A673 (cell line): ENCODE measurements at regions of chr1 and their contacts with region 1.

Region 1: DNA sequence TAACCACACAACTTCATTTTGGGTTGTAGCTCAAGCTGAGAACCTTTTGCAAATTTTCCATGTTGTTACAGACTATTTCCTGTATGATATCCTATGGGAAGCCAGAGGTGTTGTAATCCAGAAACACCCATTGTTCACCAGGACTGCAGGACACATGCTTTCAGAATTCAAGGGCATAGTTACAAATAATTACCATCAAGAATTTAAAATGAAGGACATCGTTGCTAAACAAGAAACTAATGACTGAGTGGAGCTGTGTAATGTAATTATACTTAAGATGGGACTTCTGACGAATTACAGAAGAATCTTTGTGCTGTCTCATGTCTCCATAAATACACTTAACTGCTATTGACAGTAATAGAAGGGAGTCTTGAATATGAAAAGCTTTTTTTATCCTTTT is 47.6 kb upstream of the HOOK1 start:
- DNase-seq: peak; percentile 88
- H3K4me3 ChIP-seq: no peak overlapping the region
- H3K27ac ChIP-seq: peak overlapping the region; percentile 83
- H3K4me1 ChIP-seq: peaks cover 80% of the 10 kb centered on the region
- H3K27me3 ChIP-seq: no peaks in the 10 kb centered on the region
- CTCF ChIP-seq: no peak

Region 2: GRCh38 chr1:59494145-59494833 is 272.8 kb before region 1 on chr1:
- CTCF ChIA-PET with region 1: no interaction called
- POLR2A ChIA-PET with region 1: no interaction called
- intact Hi-C with region 1: no loop called
- DNase-seq: no peak
- H3K4me3 ChIP-seq: no peak overlapping the region
- H3K27ac ChIP-seq: no peak overlapping the region
- H3K4me1 ChIP-seq: no peaks in the 10 kb centered on the region
- H3K27me3 ChIP-seq: no peaks in the 10 kb centered on the region
- CTCF ChIP-seq: no peak

Region 3: DNA sequence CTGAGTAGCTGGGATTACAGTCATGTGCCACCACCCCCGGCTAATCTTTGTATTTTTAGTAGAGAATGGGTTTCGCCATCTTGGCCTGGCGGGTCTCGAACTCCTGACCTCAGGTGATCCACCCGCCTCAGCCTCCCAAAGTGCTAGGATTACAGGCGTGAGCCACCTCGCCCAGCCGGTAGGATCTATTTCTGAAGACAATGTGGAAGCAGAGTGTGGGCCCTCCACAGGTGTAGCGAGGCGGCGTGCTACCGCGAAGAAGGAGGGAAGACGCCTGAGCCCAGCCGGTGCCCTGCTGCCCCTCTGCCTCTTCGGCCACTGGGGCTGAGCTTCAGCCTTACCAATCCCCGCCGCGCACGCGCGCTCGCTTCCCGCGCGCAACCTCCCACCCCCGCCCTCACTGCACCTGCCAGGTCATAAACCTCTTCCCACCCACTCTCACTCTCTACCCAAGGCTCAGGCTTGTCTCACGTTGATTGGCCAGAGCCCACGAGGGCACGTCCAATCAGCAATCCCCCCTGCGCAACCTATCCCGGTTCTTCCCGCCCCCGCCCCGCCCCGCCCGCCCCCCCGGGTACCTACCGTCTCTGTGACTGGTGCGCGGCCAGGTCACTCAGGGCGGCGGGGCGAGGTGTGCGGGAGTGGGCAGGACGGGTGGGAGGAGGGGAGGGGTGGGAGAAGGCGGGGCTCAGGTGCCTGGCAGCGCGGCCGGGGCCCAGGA is 47.2 kb after region 1 on chr1:
- CTCF ChIA-PET with region 1: no interaction called
- POLR2A ChIA-PET with region 1: no interaction called
- intact Hi-C with region 1: loop called (anchors 2 kb)
- DNase-seq: peak; percentile 98
- H3K4me3 ChIP-seq: peak overlapping the region; percentile 95
- H3K27ac ChIP-seq: peak overlapping the region; percentile 94
- H3K4me1 ChIP-seq: peaks cover 18% of the 10 kb centered on the region
- H3K27me3 ChIP-seq: no peaks in the 10 kb centered on the region
- CTCF ChIP-seq: no peak

Region 4: DNA sequence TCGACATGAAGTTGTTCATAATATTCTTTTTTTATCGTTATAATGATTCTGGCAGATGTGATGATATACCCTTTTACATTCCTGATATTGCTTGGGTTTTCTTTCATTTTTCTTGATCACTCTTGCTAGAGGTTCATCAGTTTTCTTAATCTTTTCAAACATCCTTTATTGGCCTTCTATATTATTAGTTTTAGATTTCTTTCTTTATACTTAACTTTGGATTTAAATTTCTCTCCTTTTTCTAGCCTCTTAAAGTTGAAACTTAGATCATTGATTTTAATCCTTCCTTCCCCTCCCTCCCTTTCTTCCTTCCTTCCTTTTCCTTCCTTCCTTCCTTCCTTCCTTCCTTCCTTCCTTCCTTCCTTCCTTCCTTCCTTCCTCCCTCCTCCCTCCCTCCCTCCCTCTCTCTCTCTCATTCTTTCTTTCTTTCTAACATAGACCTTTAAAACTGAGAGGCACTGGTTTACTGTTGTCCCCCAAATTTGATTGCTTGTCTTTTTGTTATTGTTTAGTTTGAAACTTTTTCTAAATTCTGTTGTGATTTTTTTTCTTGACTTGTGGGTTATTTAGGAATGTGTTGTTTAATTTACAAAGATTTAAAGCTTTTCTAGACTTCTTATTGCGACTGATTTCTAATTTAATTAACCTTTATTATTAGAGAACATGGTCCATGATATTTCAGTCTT is 79.2 kb after region 1 on chr1:
- CTCF ChIA-PET with region 1: no interaction called
- POLR2A ChIA-PET with region 1: interaction called, 3 read pairs
- intact Hi-C with region 1: loop called (anchors 2 kb)
- DNase-seq: peak; percentile 84
- H3K4me3 ChIP-seq: peak overlapping the region; percentile 51
- H3K27ac ChIP-seq: peak overlapping the region; percentile 100
- H3K4me1 ChIP-seq: peaks cover 39% of the 10 kb centered on the region
- H3K27me3 ChIP-seq: no peaks in the 10 kb centered on the region
- CTCF ChIP-seq: no peak